ENCODE measurements at regions of chr15 and their contacts with region 1.

Region 1: GRCh38 chr15:87133704-87134103 is 1054.0 kb downstream of the AGBL1 start:
- DNase-seq: no peak
- H3K4me3 ChIP-seq: no peak overlapping the region
- H3K27ac ChIP-seq: no peak overlapping the region
- H3K4me1 ChIP-seq: no peaks in the 10 kb centered on the region
- H3K27me3 ChIP-seq: no peaks in the 10 kb centered on the region
- CTCF ChIP-seq: no peak
- POLR2A ChIP-seq: no peak

Region 2: GRCh38 chr15:87107243-87107642 is 26.5 kb before region 1 on chr15:
- intact Hi-C with region 1: no loop called
- DNase-seq: no peak
- H3K4me3 ChIP-seq: no peak overlapping the region
- H3K27ac ChIP-seq: no peak overlapping the region
- H3K4me1 ChIP-seq: no peaks in the 10 kb centered on the region
- H3K27me3 ChIP-seq: no peaks in the 10 kb centered on the region
- CTCF ChIP-seq: no peak
- POLR2A ChIP-seq: no peak

Region 3: DNA sequence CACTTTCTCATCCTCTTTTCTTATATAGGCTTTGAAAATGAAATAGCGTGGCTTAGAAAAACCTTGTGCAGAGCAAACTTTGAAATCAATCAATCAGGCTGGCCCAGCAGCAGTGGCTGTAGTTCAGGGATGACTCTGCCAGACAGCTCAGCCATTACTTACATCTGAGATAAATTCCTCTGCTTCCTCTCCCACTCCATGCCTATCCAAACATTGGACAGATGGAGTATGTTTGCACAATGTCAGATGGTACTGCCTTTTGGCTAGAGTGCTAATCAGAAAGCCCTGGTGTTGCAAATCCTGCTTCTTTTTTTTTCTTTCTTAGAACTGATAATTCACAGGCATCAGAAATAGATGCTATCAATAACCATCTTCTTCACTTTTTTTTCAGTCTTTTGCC is 11.1 kb after region 1 on chr15:
- intact Hi-C with region 1: loop called (anchors 1 kb)
- DNase-seq: no peak
- H3K4me3 ChIP-seq: no peak overlapping the region
- H3K27ac ChIP-seq: no peak overlapping the region
- H3K4me1 ChIP-seq: no peaks in the 10 kb centered on the region
- H3K27me3 ChIP-seq: no peaks in the 10 kb centered on the region
- CTCF ChIP-seq: no peak
- POLR2A ChIP-seq: no peak

Region 4: DNA sequence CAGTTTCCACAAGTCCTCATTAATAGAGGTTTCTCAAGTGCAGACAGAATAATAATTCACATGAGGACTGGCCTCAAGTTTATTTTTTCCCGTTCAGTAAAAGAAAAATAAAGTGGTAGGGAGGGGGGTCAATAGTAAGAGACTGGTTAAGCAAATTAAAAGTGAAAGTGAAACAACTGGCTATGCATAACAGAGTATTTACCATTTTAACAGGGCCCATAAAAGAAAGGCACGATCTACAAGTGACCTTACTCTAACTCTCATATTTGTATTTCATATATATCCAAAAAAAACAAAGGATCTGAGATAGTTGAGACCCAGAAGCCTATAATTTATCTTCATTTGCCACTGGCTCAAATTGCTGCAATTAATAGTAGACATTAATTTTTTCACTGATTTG is 436.5 kb after region 1 on chr15:
- intact Hi-C with region 1: no loop called
- DNase-seq: no peak
- H3K4me3 ChIP-seq: no peak overlapping the region
- H3K27ac ChIP-seq: no peak overlapping the region
- H3K4me1 ChIP-seq: no peaks in the 10 kb centered on the region
- H3K27me3 ChIP-seq: no peaks in the 10 kb centered on the region
- CTCF ChIP-seq: no peak
- POLR2A ChIP-seq: no peak